Panc1 (cell line): ENCODE measurements at regions of chr14 and their contacts with region 1.

Region 1: DNA sequence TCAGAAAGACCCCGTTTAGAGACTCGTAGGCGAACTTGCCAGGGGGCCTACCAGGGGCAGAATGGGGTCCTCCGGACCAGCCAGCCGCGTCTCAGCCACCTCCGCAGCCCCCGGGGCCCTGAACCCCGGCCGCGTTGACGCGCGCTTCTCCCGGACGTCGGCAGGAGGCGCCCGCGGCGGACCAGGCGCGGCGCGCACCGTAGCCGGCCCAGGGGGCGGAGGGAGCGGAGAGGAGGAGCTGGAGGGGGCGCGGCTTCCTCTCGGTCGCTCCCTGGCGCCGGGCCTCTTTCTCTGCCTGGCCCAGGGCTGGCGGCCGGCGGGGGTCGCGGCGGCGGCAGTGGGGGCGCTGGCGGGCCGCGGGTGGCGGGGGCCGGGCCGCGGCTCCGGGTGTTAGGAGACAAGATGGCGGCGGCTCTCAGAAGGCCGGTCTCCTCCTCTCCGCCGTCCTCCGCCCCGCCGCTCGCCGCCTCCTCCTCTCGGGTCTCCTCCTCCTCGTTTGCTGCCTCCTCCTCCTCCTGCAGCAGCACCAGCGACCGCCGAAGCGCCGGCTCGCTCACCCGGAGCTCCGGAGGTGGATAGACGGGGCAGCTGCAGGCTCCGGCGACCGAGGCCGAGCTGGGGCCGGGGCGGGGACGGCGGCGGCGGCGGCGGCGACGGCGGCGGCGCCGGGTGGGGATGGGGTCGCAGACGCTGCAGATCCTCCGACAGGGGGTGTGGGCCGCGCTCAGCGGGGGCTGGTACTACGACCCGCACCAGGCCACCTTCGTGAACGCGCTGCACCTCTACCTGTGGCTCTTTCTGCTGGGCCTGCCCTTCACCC is at the start of gene PCNX1:
- DNase-seq: no peak
- ATAC-seq: peak; percentile 89
- H3K4me3 ChIP-seq: peak within 1 kb of the TSS; percentile 82 to 83
- H3K27ac ChIP-seq: peak within 1 kb of the TSS; percentile 84
- H3K4me1 ChIP-seq: peaks cover 10% of the 10 kb centered on the region
- H3K27me3 ChIP-seq: no peaks in the 10 kb centered on the region
- CTCF ChIP-seq: peak; percentile 92
- total RNA-seq, gene PCNX1: 30.5 TPM

Region 2: DNA sequence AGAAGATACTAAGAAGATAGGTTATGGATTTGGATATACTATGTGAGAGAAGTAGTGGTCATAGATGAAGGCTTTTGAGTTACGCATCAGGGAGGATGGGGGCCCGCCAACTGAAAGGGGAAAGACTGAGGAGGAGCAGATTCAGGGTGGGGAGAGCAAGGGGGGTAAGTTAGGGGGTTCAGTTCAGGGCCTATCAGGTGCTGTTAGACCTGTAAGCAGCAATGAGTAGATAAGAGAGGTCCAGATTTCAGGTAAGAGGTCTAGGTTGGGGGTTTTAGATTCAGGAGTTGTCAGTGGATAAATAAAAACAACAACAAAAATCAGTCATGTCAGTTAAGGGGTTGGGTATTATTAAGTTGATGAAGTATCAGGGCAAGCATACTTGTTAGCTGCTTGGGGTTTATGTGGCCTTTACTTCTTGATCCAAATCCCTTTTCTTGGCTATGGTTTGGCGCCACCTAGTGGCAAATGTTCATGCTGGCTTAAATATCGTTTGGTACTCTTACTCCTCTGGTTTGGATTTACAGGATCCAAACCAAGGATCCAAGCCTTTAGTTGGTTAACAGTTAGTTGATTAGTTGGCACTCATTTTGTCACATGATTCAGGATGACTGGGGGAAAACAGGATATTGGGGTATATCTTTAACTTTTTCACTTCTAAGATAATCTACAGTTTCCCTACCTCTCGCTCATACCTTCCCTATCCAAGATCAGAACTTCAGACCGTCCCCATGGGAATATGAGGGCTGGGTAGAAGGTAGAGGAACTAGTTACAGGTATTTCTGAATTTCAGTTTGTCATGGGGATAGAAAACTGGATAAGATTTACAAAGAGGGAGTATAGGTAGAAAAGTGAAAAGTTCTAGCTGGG is 65.0 kb after region 1 on chr14:
- CTCF ChIA-PET with region 1: no interaction called
- POLR2A ChIA-PET with region 1: no interaction called
- in situ Hi-C with region 1: no loop called
- intact Hi-C with region 1: loop called (anchors 5 kb)
- DNase-seq: peak; percentile 62
- ATAC-seq: peak; percentile 89
- H3K4me3 ChIP-seq: no peak overlapping the region
- H3K27ac ChIP-seq: no peak overlapping the region
- H3K4me1 ChIP-seq: no peaks in the 10 kb centered on the region
- H3K27me3 ChIP-seq: no peaks in the 10 kb centered on the region
- CTCF ChIP-seq: peak; percentile 81